ENCODE measurements at regions of chr15 and their contacts with region 1.

Region 1: GRCh38 chr15:50765195-50765973 is at the start of gene SPPL2A:
- DNase-seq: peak; percentile 65
- ATAC-seq: peak; percentile 82
- H3K4me3 ChIP-seq: peak within 1 kb of the TSS; percentile 99
- H3K27ac ChIP-seq: peak within 1 kb of the TSS; percentile 32
- H3K4me1 ChIP-seq: peaks cover 13% of the 10 kb centered on the region; the same call in 1 of the 2 replicates
- H3K27me3 ChIP-seq: no peaks in the 10 kb centered on the region
- CTCF ChIP-seq: no peak
- total RNA-seq, gene SPPL2A: 31.7 and 34.4 TPM in 2 replicates

Region 2: GRCh38 chr15:50686468-50687301 is 78.7 kb before region 1 on chr15 and contains the start of gene TRPM7:
- CTCF ChIA-PET with region 1: no interaction called
- POLR2A ChIA-PET with region 1: no interaction called
- intact Hi-C with region 1: loop called (anchors 5 kb)
- DNase-seq: peak; percentile 80
- ATAC-seq: peak; percentile 75
- H3K4me3 ChIP-seq: peak within 1 kb of the TSS; percentile 98
- H3K27ac ChIP-seq: peak within 1 kb of the TSS; percentile 55
- H3K4me1 ChIP-seq: peaks cover 21% of the 10 kb centered on the region
- H3K27me3 ChIP-seq: no peaks in the 10 kb centered on the region
- CTCF ChIP-seq: no peak
- total RNA-seq, gene TRPM7: 13.3 and 16.8 TPM in 2 replicates

Region 3: DNA sequence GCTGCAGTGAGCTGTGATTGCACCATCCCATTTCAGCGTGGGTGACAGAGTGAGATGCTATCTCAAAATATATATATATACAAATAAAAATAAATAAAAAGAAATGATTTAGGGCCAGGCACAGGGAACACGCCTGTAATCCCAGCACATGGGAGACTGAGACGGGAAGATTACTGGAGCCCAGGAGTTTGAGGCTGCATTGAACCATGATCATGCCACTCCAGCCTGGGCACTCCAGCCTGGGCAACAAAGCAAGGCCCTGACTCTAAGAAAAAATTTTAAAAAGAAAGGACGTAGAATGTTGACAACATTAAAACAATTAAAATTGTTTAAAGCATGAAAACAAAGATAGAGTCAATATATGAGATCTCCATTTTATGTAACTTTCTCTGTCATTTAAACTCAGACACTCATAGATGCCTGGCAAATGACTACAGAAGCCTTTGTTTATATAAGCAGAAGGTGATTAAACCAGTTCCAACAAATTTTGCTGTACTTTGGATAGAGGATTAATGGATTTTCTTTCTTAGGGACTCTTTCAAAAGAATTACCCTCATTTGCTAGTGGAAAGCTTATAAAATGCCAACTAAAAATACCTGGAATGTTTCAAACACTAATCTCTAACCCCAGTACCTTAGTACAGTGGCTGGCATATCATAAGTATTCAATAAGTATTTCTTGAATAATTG is 68.1 kb before region 1 on chr15:
- CTCF ChIA-PET with region 1: no interaction called
- POLR2A ChIA-PET with region 1: no interaction called
- intact Hi-C with region 1: no loop called
- DNase-seq: no peak
- ATAC-seq: peak; percentile 43; the same call in 1 of the 2 replicates
- H3K4me3 ChIP-seq: no peak overlapping the region
- H3K27ac ChIP-seq: no peak overlapping the region
- H3K4me1 ChIP-seq: no peaks in the 10 kb centered on the region
- H3K27me3 ChIP-seq: no peaks in the 10 kb centered on the region
- CTCF ChIP-seq: no peak

Region 4: GRCh38 chr15:50786871-50787270 is 21.5 kb after region 1 on chr15:
- CTCF ChIA-PET with region 1: no interaction called
- POLR2A ChIA-PET with region 1: no interaction called
- intact Hi-C with region 1: loop called (anchors 2 kb)
- DNase-seq: peak; percentile 26
- ATAC-seq: no peak
- H3K4me3 ChIP-seq: no peak overlapping the region
- H3K27ac ChIP-seq: no peak overlapping the region
- H3K4me1 ChIP-seq: no peaks in the 10 kb centered on the region
- H3K27me3 ChIP-seq: no peaks in the 10 kb centered on the region
- CTCF ChIP-seq: no peak

Region 5: GRCh38 chr15:50876989-50877360 is 111.6 kb after region 1 on chr15:
- CTCF ChIA-PET with region 1: no interaction called
- POLR2A ChIA-PET with region 1: no interaction called
- intact Hi-C with region 1: loop called (anchors 2 kb)
- DNase-seq: peak; percentile 96
- ATAC-seq: peak; percentile 71
- H3K4me3 ChIP-seq: peak overlapping the region; percentile 69
- H3K27ac ChIP-seq: no peak overlapping the region
- H3K4me1 ChIP-seq: peaks cover 19% of the 10 kb centered on the region
- H3K27me3 ChIP-seq: 0 out of 2 replicates have a peak, but pooled peaks cover 3% of the 10 kb centered on the region
- CTCF ChIP-seq: peak; percentile 91

Region 6: DNA sequence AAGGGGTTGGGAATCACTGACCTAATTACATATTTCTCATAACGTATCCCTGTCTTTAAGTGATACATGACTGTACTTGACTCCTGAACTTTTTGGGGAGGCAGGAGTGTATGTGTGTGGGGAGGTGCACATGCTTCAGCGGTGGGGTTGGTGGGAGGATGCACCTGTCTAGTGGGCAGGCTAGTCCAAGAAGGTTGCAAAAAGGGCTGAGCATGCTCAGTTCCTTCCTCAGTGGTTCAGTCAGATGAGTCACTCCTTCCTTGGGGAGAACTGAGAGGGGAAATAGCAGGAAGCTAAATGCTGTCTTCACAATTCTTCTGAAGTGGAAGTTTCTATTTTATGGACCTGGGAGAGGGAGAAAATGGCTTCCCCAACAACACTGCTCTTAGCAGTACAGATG is 118.5 kb after region 1 on chr15:
- CTCF ChIA-PET with region 1: no interaction called
- POLR2A ChIA-PET with region 1: no interaction called
- intact Hi-C with region 1: loop called (anchors 2 kb)
- DNase-seq: peak; percentile 61
- ATAC-seq: no peak
- H3K4me3 ChIP-seq: peak overlapping the region; percentile 51; the same call in 1 of the 2 replicates
- H3K27ac ChIP-seq: peak overlapping the region; percentile 99
- H3K4me1 ChIP-seq: peaks cover 31% of the 10 kb centered on the region
- H3K27me3 ChIP-seq: no peaks in the 10 kb centered on the region
- CTCF ChIP-seq: no peak